Heart left ventricle (tissue), 16 donors: ENCODE measurements at regions of chr12 and their contacts with region 1.

Region 1: DNA sequence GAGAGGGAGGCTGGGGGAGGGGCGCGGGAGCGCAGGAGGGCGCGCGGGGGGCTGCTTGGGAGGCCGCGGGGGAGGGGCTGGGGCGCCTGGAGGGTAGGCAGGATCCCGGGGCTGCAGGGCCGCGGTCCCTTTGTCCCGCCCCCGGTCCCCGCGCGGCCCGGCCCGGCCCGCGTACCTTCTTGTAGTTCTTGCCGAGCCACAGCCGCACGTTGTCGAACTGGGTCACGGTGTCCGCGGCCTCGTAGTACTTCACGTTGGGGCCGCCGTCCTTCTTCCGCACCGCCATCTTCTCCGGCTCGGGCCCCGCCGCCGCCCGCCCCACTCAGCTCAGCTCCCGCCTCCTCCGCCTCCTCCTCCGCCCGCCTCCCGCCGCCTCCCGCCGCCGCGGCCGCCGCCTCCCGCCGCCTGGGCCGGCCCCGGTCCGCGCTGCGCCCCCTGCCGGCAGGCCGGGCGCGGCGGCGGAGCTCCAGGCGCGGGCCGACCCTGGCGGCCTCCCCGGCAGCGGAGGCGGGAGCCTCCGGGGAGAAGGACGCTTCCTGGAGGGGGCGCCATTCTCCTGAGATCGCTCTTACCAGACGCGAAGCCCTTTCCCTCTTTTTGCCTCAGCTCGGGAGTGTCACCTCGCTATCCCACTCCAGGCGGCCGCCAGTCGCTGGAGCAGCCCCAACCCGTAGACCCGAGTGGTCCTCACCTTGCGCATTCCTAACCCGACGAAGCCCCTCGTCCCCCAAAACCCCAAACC is at the start of gene SMARCC2:
- DNase-seq: peak; percentile 87 to 94 (median 91)
- ATAC-seq: peak; percentile 85 to 94 (median 88)
- H3K4me3 ChIP-seq: peak within 1 kb of the TSS; percentile 60 to 99 (median 84)
- H3K27ac ChIP-seq: peak within 1 kb of the TSS; percentile 73 to 98 (median 91)
- H3K4me1 ChIP-seq: peaks cover 0 to 38% (median 17%) of the 10 kb centered on the region in 12 donors
- H3K27me3 ChIP-seq: no peaks in the 10 kb centered on the region
- CTCF ChIP-seq: peak; percentile 61 to 87 (median 72)
- POLR2A ChIP-seq: peak in 1 of 2 donors; percentile 30
- total RNA-seq, gene SMARCC2: 48.6 to 83.5 (median 66.2) TPM

Region 2: DNA sequence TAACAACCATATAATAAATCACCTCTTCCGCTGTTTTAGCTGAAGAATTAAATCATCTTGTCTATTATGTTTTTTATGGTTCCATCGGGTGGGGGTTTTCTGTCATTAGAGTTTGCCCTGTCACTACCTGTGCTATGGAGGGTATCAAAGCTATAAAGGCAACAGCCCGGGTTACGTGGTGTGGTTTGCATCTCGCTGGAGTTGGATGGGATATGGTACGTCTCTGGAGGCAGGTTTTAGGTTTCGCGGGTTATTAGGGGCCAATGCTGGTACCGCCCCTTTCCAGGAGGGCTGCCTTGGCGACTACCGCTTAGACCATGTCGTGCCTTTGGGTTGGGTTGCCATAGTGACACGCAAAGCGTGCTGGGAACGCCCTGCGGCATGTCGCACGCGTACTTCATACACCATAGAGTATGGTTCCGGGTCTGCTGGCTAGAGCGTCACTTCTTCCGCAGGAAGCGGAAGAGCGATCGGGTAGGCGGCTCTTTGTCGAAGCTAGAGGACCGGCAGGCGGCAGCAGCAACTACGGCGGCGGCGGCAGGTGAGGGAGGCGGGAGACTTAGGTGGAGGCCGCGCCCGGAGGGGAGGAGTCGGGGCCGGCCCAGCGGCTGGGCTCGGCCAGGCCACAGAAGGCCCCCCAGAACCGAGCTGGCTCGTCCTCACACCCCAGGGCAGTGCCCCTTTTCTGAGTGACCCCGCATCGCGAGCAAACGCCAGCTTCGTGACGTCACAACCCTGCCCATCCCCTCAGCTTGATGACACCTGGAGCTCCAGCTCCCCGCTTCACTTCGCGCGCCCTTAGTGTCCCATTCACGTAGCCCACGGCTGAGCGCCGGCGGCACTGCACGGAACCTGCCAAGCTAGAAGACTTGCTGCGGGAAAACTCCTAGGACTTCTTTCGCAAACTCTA is 71.3 kb before region 1 on chr12 and contains the start of gene ZC3H10:
- intact Hi-C with region 1: loop called in 9 of 10 experiments (anchors 1 to 2 kb)
- DNase-seq: peak; percentile 96 to 99 (median 97)
- ATAC-seq: peak; percentile 86 to 92 (median 87)
- H3K4me3 ChIP-seq: peak within 1 kb of the TSS; percentile 65 to 95 (median 78)
- H3K27ac ChIP-seq: peak within 1 kb of the TSS; percentile 72 to 98 (median 94)
- H3K4me1 ChIP-seq: peaks cover 0 to 53% (median 25%) of the 10 kb centered on the region in 12 donors
- H3K27me3 ChIP-seq: no peaks in the 10 kb centered on the region
- CTCF ChIP-seq: peak in 11 of 12 donors; percentile 24 to 80 (median 57)
- POLR2A ChIP-seq: peak in 1 of 2 donors; percentile 89
- total RNA-seq, gene ZC3H10: 2.7 to 6.4 (median 4.9) TPM

Region 3: GRCh38 chr12:56158029-56158925 is 31.1 kb before region 1 on chr12 and contains the start of gene MYL6:
- intact Hi-C with region 1: loop called in 1 of 10 experiments (anchors 2 kb)
- DNase-seq: peak; percentile 92 to 98 (median 98)
- ATAC-seq: peak; percentile 88 to 92 (median 90)
- H3K4me3 ChIP-seq: peak within 1 kb of the TSS; percentile 62 to 98 (median 90)
- H3K27ac ChIP-seq: peak within 1 kb of the TSS; percentile 92 to 99 (median 98)
- H3K4me1 ChIP-seq: peaks cover 4 to 48% (median 37%) of the 10 kb centered on the region in 12 donors
- H3K27me3 ChIP-seq: no peaks in the 10 kb centered on the region
- CTCF ChIP-seq: no peak
- POLR2A ChIP-seq: peak; percentile 99
- total RNA-seq, gene MYL6: 355 to 949 (median 613) TPM

Region 4: DNA sequence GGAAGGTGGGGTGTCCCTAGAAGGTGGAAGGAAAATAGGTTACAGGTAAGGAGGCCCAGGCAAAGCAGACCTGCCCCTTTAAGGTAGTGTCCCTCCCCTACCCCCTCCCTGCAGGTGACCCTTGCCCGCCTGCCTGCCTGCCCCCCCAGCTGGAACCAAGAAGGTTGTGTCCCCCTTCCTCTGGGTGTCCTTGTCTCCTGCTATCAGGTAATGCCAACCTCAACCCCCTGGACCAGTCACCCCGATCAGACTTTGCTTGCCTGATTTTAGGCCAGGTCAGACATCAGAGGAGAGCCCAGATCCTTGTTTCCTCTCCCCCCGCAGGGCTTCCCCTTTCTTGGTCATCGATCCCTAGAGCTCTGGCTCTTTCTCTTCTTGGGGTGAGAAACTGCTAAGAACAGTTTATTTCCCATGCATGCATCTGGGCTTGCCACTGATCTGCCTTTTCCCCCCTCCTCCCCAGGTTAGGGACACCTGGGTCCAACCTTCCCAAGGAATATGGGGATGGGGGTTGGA is 40.6 kb after region 1 on chr12 and contains the start of gene SLC39A5:
- intact Hi-C with region 1: loop called in 5 of 10 experiments (anchors 2 to 5 kb)
- DNase-seq: peak in 1 of 5 donors; percentile 10
- ATAC-seq: no peak
- H3K4me3 ChIP-seq: no peak within 1 kb of the TSS
- H3K27ac ChIP-seq: no peak within 1 kb of the TSS
- H3K4me1 ChIP-seq: peaks cover 0 to 3% (median under 1%) of the 10 kb centered on the region in 12 donors
- H3K27me3 ChIP-seq: no peaks in the 10 kb centered on the region
- CTCF ChIP-seq: no peak
- POLR2A ChIP-seq: no peak
- total RNA-seq, gene SLC39A5: not detected

Region 5: DNA sequence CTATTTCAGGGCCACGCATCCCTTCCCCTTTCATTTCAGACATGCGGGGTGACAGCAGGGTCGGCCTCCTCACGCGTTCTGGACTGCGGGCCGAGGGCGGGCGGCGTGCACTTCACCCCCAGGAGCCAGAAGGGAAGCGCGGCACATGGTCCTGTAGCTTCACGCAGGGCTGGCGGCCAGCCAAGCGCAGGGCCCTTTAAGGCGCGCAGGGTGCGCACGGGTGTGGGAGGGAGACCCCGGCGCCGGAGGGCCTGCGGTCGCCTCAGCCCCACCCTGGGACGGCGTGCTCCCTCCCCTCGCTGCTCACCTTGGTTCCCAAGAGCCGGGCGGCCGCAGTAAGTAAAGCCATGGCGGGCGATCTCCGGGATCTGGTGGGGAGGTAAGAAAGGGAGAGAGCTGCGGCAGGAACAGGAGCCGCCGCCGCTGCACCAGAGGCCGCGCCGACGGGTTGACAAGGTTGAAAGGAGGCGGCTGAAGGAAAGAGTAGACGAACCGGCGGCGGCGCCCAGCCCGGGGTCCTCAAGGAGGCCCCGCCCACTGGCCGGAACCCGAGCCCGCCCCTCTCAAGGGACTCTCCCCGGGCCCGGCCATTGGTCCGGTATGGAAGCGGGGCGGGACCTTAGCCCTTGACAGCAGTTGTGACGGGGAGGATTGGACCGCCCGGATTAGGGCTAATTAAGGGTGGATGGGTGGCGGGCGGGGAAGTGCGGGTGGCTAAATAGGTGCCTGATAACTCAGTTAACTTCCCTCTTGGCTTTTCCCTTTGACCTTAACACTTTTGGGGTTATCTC is 110.7 kb after region 1 on chr12 and contains the start of gene CS:
- intact Hi-C with region 1: loop called in 1 of 10 experiments (anchors 2 kb)
- DNase-seq: peak; percentile 99 to 100 (median 99)
- ATAC-seq: peak; percentile 97 to 99 (median 98)
- H3K4me3 ChIP-seq: peak within 1 kb of the TSS; percentile 62 to 98 (median 84)
- H3K27ac ChIP-seq: peak within 1 kb of the TSS; percentile 89 to 100 (median 96)
- H3K4me1 ChIP-seq: peaks cover 24 to 63% (median 53%) of the 10 kb centered on the region in 12 donors
- H3K27me3 ChIP-seq: no peaks in the 10 kb centered on the region
- CTCF ChIP-seq: no peak
- POLR2A ChIP-seq: peak; percentile 21 to 90
- total RNA-seq, gene CS: 489 to 866 (median 662) TPM

Region 6: GRCh38 chr12:56348776-56349175 is 159.4 kb after region 1 on chr12:
- intact Hi-C with region 1: no loop called
- DNase-seq: no peak
- ATAC-seq: no peak
- H3K4me3 ChIP-seq: no peak overlapping the region
- H3K27ac ChIP-seq: no peak overlapping the region
- H3K4me1 ChIP-seq: no peaks in the 10 kb centered on the region
- H3K27me3 ChIP-seq: no peaks in the 10 kb centered on the region
- CTCF ChIP-seq: no peak
- POLR2A ChIP-seq: no peak

Region 7: GRCh38 chr12:56468216-56469006 is 279.1 kb after region 1 on chr12 and contains the start of gene SPRYD4:
- intact Hi-C with region 1: loop called in 8 of 10 experiments (anchors 1 to 10 kb)
- DNase-seq: peak; percentile 94 to 96 (median 94)
- ATAC-seq: peak; percentile 96 to 99 (median 97)
- H3K4me3 ChIP-seq: peak within 1 kb of the TSS; percentile 53 to 95 (median 78)
- H3K27ac ChIP-seq: peak within 1 kb of the TSS; percentile 40 to 95 (median 89)
- H3K4me1 ChIP-seq: peaks cover 0 to 34% (median 10%) of the 10 kb centered on the region in 12 donors
- H3K27me3 ChIP-seq: no peaks in the 10 kb centered on the region
- CTCF ChIP-seq: peak in 10 of 12 donors; percentile 18 to 64 (median 38)
- POLR2A ChIP-seq: peak in 1 of 2 donors; percentile 84
- total RNA-seq, gene SPRYD4: 2.2 to 4.7 (median 3.0) TPM

Region 8: GRCh38 chr12:56529290-56530055 is 340.1 kb after region 1 on chr12:
- intact Hi-C with region 1: no loop called
- DNase-seq: no peak
- ATAC-seq: no peak
- H3K4me3 ChIP-seq: no peak overlapping the region
- H3K27ac ChIP-seq: peak overlapping the region in 1 of 12 donors; percentile 15
- H3K4me1 ChIP-seq: peaks cover 0 to 60% (median 33%) of the 10 kb centered on the region in 12 donors
- H3K27me3 ChIP-seq: no peaks in the 10 kb centered on the region
- CTCF ChIP-seq: no peak
- POLR2A ChIP-seq: no peak